Transverse colon (tissue), 4 donors: ENCODE measurements at regions of chr11 and their contacts with region 1.

Region 1: GRCh38 chr11:79087238-79087960 is 353.4 kb downstream of the TENM4 start:
- DNase-seq: no peak
- H3K4me3 ChIP-seq: no peak overlapping the region
- H3K27ac ChIP-seq: peak overlapping the region in 2 of 4 donors; percentile 21 to 25
- H3K4me1 ChIP-seq: peaks cover 0 to 14% (median 8%) of the 10 kb centered on the region in 4 donors
- H3K27me3 ChIP-seq: no peaks in the 10 kb centered on the region
- CTCF ChIP-seq: no peak
- EP300 ChIP-seq: no peak
- POLR2A ChIP-seq: no peak

Region 2: GRCh38 chr11:78332174-78332866 is 755.1 kb before region 1 on chr11:
- in situ Hi-C with region 1: no loop called
- intact Hi-C with region 1: loop called (anchors 5 kb)
- DNase-seq: no peak
- H3K4me3 ChIP-seq: no peak overlapping the region
- H3K27ac ChIP-seq: no peak overlapping the region
- H3K4me1 ChIP-seq: peaks cover 0 to 5% (median 1%) of the 10 kb centered on the region in 4 donors
- H3K27me3 ChIP-seq: no peaks in the 10 kb centered on the region
- CTCF ChIP-seq: no peak
- EP300 ChIP-seq: no peak
- POLR2A ChIP-seq: no peak

Region 3: DNA sequence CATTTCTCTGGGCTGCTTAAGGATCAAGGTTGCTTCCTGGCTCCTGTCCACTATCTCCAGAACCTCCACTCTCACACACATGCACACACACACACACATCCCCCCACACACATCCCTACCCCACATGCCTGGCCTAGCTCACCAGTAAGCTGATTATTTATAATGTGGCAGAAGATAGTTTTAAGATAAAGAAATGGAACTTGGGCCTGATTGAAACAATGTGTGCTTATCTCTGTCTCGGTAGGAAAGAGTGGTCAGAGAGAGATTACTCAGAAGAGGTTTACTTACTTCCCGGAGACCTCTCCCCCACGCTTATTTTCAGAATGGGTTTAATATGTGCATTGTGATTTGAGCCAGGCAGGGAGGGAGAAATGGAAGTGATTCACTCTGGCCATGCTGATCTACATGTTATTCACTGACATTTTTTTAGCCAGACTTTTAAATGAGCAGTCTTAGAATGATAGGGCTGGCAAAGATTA is 69.0 kb before region 1 on chr11:
- in situ Hi-C with region 1: no loop called
- intact Hi-C with region 1: no loop called
- DNase-seq: no peak
- H3K4me3 ChIP-seq: no peak overlapping the region
- H3K27ac ChIP-seq: no peak overlapping the region
- H3K4me1 ChIP-seq: no peaks in the 10 kb centered on the region
- H3K27me3 ChIP-seq: no peaks in the 10 kb centered on the region
- CTCF ChIP-seq: no peak
- EP300 ChIP-seq: no peak
- POLR2A ChIP-seq: no peak

Region 4: DNA sequence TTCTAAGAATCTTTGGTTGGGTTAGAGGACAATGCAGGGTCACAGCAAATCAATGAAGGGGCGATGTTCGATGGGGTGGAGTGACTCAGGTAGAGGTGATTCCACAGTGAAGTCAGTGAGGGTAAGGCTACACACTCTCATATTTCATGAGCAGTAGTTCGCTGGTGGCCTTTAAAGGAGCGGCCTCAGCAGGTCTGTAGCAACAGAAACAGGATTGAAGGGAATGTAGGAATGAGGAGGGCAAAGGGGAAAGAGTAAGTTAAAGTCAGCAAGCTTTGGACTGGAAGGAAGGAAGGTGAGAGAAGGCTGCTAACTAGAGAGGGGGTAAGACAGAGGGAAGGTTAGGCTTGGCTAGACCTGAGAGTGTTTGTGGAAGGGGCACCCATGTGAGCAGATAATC is 544.3 kb after region 1 on chr11:
- in situ Hi-C with region 1: no loop called
- intact Hi-C with region 1: no loop called
- DNase-seq: no peak
- H3K4me3 ChIP-seq: no peak overlapping the region
- H3K27ac ChIP-seq: no peak overlapping the region
- H3K4me1 ChIP-seq: no peaks in the 10 kb centered on the region
- H3K27me3 ChIP-seq: no peaks in the 10 kb centered on the region
- CTCF ChIP-seq: no peak
- EP300 ChIP-seq: no peak
- POLR2A ChIP-seq: no peak